ENCODE measurements at regions of chr1 and their contacts with region 1.

Region 1: GRCh38 chr1:203528063-203528462 is 34.1 kb downstream of the OPTC start:
- DNase-seq: no peak
- H3K4me3 ChIP-seq: no peak overlapping the region
- H3K27ac ChIP-seq: no peak overlapping the region
- H3K4me1 ChIP-seq: peaks cover 12% of the 10 kb centered on the region
- H3K27me3 ChIP-seq: no peaks in the 10 kb centered on the region
- CTCF ChIP-seq: no peak

Region 2: DNA sequence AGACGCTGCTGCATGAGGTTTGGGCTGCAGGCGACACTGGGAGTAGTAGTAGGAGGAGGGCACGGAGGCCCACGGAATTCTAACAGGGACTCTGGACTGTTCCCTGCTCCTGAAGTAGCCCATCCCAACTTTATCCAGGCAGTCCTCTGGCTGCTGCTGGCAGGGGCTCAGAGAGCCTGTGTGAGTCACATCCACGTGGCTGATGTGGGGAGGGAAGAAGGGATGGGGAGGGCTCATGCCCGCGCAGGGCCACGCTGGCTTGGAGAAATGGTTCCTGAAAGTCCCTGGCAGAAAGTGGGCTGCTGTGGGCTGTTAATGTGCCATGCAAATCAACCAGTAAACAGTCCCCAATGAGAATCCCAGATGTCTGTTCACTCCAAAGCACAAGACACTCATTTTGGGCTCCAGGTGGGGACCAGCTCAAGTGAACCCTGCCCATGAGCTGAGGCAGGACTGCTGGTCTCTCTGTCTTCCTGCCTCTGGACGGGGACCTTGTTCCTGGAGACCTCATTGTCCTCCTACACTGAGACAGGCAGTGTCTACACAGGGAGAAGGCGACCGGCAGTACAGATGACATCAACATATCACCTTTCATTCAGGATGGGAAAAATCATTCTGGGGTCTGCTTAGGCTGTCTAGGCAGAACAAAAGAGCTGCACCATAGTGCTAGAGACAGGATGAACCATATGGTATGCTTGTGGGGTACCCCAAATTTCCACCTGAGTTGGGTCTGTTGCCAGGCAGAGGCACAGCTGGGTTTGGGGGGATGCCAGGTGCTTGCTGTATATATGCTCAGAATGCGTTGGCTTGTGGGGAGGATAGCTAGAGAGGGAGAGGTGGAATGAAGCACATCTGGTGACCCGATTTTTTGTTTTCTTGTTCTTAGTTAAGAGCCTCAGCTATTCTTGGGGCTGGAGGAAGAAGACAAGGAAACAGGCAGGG is 119.3 kb before region 1 on chr1:
- CTCF ChIA-PET with region 1: no interaction called
- POLR2A ChIA-PET with region 1: interaction called, 10 read pairs
- intact Hi-C with region 1: no loop called
- DNase-seq: no peak
- H3K4me3 ChIP-seq: no peak overlapping the region
- H3K27ac ChIP-seq: no peak overlapping the region
- H3K4me1 ChIP-seq: no peaks in the 10 kb centered on the region
- H3K27me3 ChIP-seq: peaks cover 3% of the 10 kb centered on the region
- CTCF ChIP-seq: no peak

Measured in A673 (cell line).